ENCODE measurements at regions of chr18 and their contacts with region 1.

Region 1: DNA sequence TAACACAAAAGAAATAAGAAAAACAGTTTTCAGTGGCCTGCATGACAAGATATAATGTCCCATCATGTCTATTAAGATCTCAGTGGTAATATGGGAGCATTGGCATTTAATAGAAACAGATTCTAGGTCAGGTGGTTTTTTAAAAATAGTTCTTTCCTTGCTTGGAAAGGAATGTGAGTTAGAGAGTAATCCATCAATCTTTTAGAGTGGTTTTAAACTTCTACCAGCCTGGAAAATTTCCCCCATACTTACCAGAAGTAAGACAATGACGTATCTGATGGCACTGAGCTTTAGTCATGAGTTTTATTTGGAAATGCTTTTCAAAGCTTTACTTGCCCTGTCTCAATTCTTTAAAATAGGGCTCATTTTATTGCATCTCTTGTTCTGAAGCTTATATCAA is 441.7 kb upstream of the SMIM21 start:
- DNase-seq: no peak
- H3K4me3 ChIP-seq: no peak overlapping the region
- H3K27ac ChIP-seq: peak overlapping the region; percentile 53 to 80 (median 62)
- H3K4me1 ChIP-seq: peaks cover 0 to 4% (median under 1%) of the 10 kb centered on the region in 4 donors
- H3K27me3 ChIP-seq: no peaks in the 10 kb centered on the region
- CTCF ChIP-seq: no peak
- EP300 ChIP-seq: peak; percentile 54
- POLR2A ChIP-seq: no peak

Region 2: GRCh38 chr18:75276818-75277609 is 592.1 kb before region 1 on chr18:
- in situ Hi-C with region 1: no loop called
- intact Hi-C with region 1: no loop called
- DNase-seq: no peak
- H3K4me3 ChIP-seq: no peak overlapping the region
- H3K27ac ChIP-seq: no peak overlapping the region
- H3K4me1 ChIP-seq: peaks cover 0 to 13% (median 3%) of the 10 kb centered on the region in 4 donors
- H3K27me3 ChIP-seq: no peaks in the 10 kb centered on the region
- CTCF ChIP-seq: no peak
- EP300 ChIP-seq: no peak
- POLR2A ChIP-seq: no peak

Region 3: DNA sequence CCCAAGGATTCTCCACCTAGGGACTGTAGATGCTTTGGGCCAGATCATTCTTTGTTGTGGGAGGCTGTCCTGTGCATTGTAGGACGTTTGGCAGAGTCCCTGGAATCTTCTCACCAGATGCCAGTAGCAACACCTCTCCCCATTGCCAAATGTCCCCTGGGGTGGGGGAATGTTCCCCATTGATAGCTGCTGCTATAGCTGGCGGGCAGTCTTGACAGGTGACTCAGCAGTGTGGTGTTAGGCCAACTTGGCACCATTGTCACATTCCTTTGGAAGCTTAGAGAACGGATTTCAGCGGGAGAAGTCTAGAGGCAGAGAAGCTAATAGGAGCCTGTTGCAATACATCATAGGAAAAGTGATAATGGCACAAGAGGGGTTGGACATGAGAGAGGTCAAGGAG is 54.0 kb after region 1 on chr18:
- in situ Hi-C with region 1: no loop called
- intact Hi-C with region 1: loop called (anchors 2 kb)
- DNase-seq: peak; percentile 26
- H3K4me3 ChIP-seq: no peak overlapping the region
- H3K27ac ChIP-seq: peak overlapping the region in 3 of 4 donors; percentile 22 to 43 (median 33)
- H3K4me1 ChIP-seq: no peaks in the 10 kb centered on the region
- H3K27me3 ChIP-seq: no peaks in the 10 kb centered on the region
- CTCF ChIP-seq: no peak
- EP300 ChIP-seq: no peak
- POLR2A ChIP-seq: no peak

Measured in transverse colon (tissue), 4 donors.